Activated CD4-positive, alpha-beta memory T cell treated with anti-CD3 and anti-CD28 coated beads for 36 hours (primary cell): ENCODE measurements at regions of chr5 and their contacts with region 1.

Region 1: DNA sequence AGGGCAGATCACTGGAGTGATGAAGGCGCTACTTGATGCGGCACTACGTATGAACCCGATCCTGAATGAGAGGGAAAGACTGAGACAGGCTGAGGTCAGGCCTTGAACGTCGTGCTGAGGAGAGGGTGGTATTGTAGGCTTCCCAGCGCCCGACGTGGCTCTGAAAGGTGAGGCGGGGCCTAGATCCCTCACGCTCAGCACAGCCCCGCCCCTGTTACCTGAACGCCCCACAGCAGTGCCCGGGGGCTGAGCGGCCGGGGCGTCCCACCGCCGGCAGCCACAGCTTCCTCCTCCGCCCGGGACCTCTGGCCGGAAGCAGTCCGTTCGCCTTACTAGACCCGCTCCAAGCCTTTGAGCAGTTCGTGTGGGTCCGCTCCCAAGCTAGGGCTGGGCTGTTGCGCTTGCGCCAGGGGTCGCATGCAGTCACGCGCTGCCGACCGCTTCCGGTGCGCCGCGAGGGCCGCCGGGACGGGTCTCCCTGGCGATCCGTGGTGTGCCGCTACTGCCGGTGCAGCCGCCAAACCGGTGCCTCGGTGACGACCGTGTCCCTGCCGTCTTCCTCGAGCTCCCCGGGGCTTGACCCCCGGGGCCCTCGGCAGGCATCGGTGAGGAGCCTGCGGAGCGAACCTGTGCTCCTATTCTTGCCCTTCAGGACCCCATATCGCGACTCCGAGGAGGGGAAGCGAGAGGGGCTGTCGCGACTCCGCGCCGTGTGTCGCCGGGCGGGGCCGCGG is at the starts of genes HMGXB3 and TIGD6:
- DNase-seq: peak; percentile 93
- H3K4me3 Mint-ChIP-seq: peak within 1 kb of the TSS; percentile 86
- H3K27ac Mint-ChIP-seq: peak within 1 kb of the TSS; percentile 93
- H3K4me1 Mint-ChIP-seq: peaks cover 39% of the 10 kb centered on the region
- H3K27me3 Mint-ChIP-seq: no peaks in the 10 kb centered on the region
- total RNA-seq, gene HMGXB3: 29.4 to 31.3 TPM
- total RNA-seq, gene TIGD6: 2.5 to 2.6 TPM

Region 2: DNA sequence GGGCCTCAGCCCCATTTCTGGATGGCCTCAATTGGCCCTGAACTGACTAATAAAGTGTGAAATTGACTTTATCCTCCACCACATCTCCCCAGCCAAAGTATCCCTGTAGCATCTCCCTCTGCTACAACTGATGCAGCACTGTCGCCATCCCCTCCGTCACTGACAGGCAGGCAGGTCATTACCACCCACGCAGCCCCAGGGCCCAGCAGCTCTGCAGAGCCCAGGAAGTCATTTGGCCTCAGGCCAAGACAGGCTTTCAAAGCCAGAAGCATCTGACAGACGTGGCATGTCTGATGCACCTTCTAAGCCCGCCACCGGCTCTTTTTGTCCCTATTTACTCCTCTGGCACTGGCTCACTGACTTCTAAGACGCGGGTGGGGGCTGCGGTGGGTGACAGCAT is 353.9 kb before region 1 on chr5:
- CTCF ChIA-PET with region 1: no interaction called
- POLR2A ChIA-PET with region 1: no interaction called
- intact Hi-C with region 1: loop called (anchors 5 kb)
- DNase-seq: peak; percentile 63
- H3K4me3 Mint-ChIP-seq: no peak overlapping the region
- H3K27ac Mint-ChIP-seq: no peak overlapping the region
- H3K4me1 Mint-ChIP-seq: peaks cover 6% of the 10 kb centered on the region
- H3K27me3 Mint-ChIP-seq: no peaks in the 10 kb centered on the region

Region 3: GRCh38 chr5:149960272-149961185 is 39.9 kb before region 1 on chr5 and contains the start of gene SLC26A2:
- CTCF ChIA-PET with region 1: interaction called, 13 read pairs
- POLR2A ChIA-PET with region 1: interaction called, 21 read pairs
- intact Hi-C with region 1: loop called (anchors 1 kb)
- DNase-seq: peak; percentile 97
- H3K4me3 Mint-ChIP-seq: peak within 1 kb of the TSS; percentile 91
- H3K27ac Mint-ChIP-seq: peak within 1 kb of the TSS; percentile 97
- H3K4me1 Mint-ChIP-seq: peaks cover 25% of the 10 kb centered on the region
- H3K27me3 Mint-ChIP-seq: no peaks in the 10 kb centered on the region
- total RNA-seq, gene SLC26A2: 5.9 to 6.2 TPM

Region 4: GRCh38 chr5:150272526-150272925 is 272.1 kb after region 1 on chr5:
- CTCF ChIA-PET with region 1: no interaction called
- POLR2A ChIA-PET with region 1: no interaction called
- intact Hi-C with region 1: no loop called
- DNase-seq: peak; percentile 21
- H3K4me3 Mint-ChIP-seq: no peak overlapping the region
- H3K27ac Mint-ChIP-seq: no peak overlapping the region
- H3K4me1 Mint-ChIP-seq: no peaks in the 10 kb centered on the region
- H3K27me3 Mint-ChIP-seq: no peaks in the 10 kb centered on the region

Region 5: DNA sequence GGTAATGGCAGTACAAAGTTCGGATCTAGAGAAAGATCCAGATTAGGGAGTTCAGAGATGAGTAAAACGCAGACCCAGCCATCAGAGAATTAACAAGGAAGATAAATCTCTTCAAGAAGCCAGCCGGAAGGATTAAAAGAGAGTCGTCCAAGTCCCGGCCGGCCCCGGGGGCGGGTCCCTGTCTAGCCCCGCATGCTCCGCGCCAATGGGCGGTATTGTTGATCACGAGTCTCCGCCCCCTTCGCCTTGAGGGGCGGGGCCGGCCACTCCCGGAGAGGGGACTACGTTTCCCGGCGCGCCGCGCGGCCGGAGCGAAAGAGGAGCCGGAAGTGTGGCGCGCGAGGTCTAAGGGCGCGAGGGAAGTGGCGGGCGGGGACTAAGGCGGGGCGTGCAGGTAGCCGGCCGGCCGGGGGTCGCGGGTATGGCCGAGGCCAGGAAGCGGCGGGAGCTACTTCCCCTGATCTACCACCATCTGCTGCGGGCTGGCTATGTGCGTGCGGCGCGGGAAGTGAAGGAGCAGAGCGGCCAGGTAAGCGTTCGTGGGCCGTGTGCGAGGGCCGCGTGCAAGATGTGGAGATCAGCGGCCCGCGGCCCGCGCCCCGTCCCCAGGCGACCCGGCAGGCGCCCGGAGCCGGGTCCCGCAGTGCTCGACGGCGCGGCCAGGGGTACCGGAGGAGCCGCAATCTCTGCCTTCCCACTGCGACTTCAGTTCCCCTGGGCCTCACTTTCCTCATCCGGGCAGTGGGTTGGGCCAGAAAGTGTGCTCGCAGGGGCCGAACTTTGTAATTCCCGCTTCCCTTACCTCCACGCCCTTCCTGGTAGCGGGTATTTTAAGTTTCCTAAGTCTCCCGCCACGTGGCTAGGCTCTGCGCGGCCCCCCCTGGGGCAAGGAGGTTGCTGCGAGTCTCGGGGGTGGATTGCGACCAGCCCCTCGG is 357.2 kb after region 1 on chr5 and contains the start of gene TCOF1:
- CTCF ChIA-PET with region 1: no interaction called
- POLR2A ChIA-PET with region 1: no interaction called
- intact Hi-C with region 1: loop called (anchors 5 kb)
- DNase-seq: peak; percentile 98
- H3K4me3 Mint-ChIP-seq: peak within 1 kb of the TSS; percentile 89
- H3K27ac Mint-ChIP-seq: peak within 1 kb of the TSS; percentile 81
- H3K4me1 Mint-ChIP-seq: peaks cover 35% of the 10 kb centered on the region
- H3K27me3 Mint-ChIP-seq: no peaks in the 10 kb centered on the region
- total RNA-seq, gene TCOF1: 91.3 to 95.0 TPM